ENCODE measurements at regions of chr15 and their contacts with region 1.

Region 1: DNA sequence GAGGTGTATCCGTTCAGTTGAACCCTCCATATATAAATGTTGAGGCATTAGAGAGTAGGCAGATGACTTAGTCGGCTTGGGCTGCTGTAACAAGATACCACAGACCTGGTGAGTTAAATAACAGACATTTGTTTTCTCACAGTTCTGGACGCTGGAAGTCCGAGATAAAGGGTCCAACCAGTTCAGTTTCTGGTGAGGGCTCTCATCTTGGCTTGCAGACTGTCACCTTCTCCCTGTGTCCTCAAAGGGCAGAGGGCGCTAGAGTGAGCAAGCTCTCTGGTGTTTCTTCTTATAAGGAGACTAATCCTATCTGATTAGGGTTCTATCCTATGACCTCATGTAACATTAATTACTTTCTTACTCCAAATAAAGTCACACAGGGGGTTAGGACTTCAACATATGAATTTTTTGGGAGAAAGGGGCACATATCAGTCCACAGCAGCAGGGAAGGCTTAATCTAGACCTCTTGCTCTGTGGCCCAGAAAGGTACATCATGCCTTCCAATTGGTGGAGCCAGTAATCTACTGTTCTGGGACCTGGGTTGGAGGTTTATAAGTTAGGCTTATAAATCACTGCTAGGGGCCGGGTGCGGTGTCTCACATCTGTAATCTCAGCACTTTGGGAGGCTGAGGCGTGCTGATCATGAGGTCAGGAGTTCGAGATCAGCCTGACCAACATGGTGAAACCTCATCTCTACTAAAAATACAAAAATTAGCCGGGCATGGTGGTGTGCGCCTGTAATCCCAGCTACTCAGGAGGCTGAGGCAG is 26.3 kb upstream of the SLC28A2 start:
- DNase-seq: no peak
- H3K4me3 ChIP-seq: no peak overlapping the region
- H3K27ac ChIP-seq: no peak overlapping the region
- H3K4me1 ChIP-seq: no peaks in the 10 kb centered on the region
- H3K27me3 ChIP-seq: no peaks in the 10 kb centered on the region; the same call in 1 of the 2 replicates
- CTCF ChIP-seq: no peak

Region 2: DNA sequence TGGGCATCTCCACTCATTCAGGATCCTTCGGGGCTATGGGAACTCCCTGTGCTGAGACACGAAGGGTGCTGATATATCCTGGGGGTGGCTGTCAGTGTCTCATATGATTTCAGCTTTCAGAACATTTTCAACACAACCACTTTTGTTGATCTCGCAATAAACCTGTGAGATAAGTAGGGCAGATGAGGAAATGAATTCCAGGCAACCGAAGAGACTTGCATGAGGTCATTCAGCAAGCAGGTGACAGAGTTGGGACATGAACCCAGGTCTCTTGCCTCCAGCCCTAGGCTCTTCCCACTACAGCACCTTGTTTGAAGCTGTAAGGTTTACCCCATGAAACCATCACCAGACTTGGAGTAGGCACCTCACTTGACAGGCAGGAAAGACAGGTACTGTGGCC is 79.3 kb before region 1 on chr15:
- CTCF ChIA-PET with region 1: interaction called, 10 read pairs
- POLR2A ChIA-PET with region 1: no interaction called
- intact Hi-C with region 1: no loop called
- DNase-seq: peak; percentile 22 to 71
- H3K4me3 ChIP-seq: no peak overlapping the region
- H3K27ac ChIP-seq: peak overlapping the region; percentile 9; the same call in 1 of the 2 replicates
- H3K4me1 ChIP-seq: peaks cover 15% of the 10 kb centered on the region
- H3K27me3 ChIP-seq: no peaks in the 10 kb centered on the region
- CTCF ChIP-seq: no peak

Region 3: DNA sequence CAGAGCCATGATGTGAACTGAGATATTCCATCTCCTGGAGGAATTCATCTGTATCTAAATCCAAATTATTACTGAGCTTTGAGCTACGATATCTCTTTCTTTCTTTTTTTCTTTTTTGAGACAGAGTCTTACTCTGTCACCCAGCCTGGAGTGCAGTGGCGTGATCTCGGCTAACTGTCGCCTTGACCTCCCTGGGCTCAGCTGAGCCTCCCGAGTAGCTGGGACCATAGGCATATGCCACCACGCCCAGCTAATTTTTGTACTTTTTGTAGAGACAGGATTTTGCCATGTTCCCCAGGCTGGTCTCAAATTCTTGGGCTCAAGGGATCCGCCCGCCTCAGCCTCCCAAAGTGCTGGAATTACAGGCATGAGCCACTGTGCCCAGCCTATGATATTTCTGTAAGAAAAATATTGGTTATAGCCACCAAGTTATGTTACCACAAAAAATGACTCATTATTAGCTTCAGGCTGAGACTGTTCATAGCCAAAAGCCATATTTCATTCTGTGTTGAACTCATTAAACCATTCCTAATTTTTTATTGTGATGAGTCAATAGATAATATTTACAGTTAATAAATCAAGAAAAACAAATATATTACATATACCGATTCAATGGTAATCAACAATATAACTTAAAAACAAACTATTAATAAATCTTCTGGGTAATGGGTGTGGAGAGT is 324.0 kb after region 1 on chr15:
- CTCF ChIA-PET with region 1: no interaction called
- POLR2A ChIA-PET with region 1: no interaction called
- intact Hi-C with region 1: no loop called
- DNase-seq: peak in 1 of 2 experiments; percentile 52
- H3K4me3 ChIP-seq: no peak overlapping the region
- H3K27ac ChIP-seq: no peak overlapping the region
- H3K4me1 ChIP-seq: no peaks in the 10 kb centered on the region
- H3K27me3 ChIP-seq: no peaks in the 10 kb centered on the region
- CTCF ChIP-seq: no peak

Measured in PC-9 (cell line).